Ascending aorta (tissue), 2 donors: ENCODE measurements at regions of chr20 and their contacts with region 1.

Region 1: GRCh38 chr20:1802385-1803060 is 92.7 kb upstream of the SIRPA start:
- DNase-seq: peak in 1 of 2 donors; percentile 83
- H3K4me3 ChIP-seq: peak overlapping the region; percentile 74 to 76
- H3K27ac ChIP-seq: peak overlapping the region; percentile 52 to 69
- H3K4me1 ChIP-seq: peaks cover 4 to 6% of the 10 kb centered on the region in 2 donors
- H3K27me3 ChIP-seq: no peaks in the 10 kb centered on the region
- CTCF ChIP-seq: peak; percentile 65 to 87 (median 67)

Region 2: DNA sequence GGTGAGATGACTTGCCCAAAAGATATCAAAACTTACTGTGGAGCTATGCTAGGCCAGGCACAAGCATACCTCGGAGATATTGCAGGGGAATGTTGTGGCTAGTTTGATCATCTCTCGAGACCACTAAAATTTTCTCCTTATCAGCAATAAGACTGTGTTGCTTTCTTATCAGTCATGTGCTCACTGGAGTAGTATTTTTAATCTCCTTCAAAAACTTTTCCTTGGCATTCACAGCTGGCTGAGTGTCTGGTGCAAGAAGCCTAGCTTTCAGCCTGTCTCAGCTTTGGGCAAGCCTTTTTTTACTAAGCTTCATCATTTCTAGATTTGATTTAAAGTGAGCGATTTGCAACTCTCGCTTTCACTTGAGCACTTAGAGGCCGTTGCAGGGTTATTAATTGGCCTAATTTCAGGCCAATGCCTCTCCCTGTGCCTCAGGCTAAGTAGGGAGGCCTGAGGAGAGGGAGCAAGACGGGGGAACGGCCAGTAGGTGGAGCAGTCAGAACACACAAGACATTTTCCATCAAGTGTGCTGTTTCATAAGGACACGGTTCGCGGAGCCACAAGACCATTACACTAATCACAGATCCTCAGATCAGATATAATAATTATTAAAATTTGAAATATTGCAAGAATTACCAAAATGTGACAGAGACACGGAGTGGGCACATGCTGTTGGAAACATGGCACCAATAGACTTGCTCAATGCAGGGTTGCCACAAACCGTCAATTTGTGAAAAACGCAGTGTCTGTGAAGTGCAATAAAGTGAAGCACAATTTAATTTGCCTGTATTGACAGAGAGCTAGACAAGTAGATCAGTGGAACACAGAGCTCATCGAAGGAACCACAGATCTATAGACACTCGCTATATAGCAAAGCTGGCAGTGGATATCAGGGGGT is 38.1 kb before region 1 on chr20:
- intact Hi-C with region 1: no loop called
- DNase-seq: peak; percentile 23 to 87
- H3K4me3 ChIP-seq: no peak overlapping the region
- H3K27ac ChIP-seq: no peak overlapping the region
- H3K4me1 ChIP-seq: peaks cover 0 to 6% of the 10 kb centered on the region in 2 donors
- H3K27me3 ChIP-seq: no peaks in the 10 kb centered on the region
- CTCF ChIP-seq: peak; percentile 52 to 80 (median 73)

Region 3: DNA sequence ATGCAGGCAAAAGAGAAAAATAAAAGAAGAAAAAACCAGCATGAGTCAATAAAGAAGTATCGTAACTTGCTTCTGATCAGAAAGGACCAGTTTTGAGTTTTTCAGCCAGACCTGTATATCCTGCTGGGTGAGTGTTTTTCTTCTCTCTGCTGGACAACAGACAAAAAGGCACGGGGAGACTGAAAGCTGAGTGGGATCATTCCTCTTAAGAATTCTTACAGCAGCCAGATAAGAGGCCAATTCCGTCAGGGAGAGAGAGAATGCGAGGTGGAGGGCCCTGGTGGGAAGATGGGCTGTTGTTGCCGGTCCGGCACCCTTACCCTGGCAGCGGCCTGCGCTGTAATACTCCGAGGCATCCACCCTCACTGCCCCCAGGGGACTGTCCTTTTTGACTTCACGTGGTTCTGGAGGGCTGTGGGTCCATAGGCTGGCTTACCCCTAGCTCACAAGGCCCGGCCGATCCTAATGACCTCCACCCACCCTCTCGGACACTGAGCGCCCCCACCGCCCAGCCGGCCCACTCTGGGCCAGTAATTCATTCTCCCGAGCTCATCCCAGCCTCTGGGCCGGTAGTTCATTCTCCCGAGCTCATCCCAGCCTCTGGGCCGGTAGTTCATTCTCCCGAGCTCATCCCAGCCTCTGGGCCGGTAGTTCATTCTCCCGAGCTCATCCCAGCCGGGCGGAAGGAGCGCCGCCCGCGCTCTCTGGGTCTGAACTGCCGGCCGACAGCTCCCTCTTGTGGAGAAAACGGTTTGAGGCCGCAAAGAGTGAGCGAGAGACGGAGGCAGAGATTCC is 25.6 kb before region 1 on chr20:
- intact Hi-C with region 1: loop called (anchors 1 kb)
- DNase-seq: peak; percentile 41 to 93
- H3K4me3 ChIP-seq: peak overlapping the region; percentile 60 to 74
- H3K27ac ChIP-seq: no peak overlapping the region
- H3K4me1 ChIP-seq: peaks cover 0 to 8% of the 10 kb centered on the region in 2 donors
- H3K27me3 ChIP-seq: no peaks in the 10 kb centered on the region
- CTCF ChIP-seq: peak; percentile 71 to 83 (median 82)

Region 4: DNA sequence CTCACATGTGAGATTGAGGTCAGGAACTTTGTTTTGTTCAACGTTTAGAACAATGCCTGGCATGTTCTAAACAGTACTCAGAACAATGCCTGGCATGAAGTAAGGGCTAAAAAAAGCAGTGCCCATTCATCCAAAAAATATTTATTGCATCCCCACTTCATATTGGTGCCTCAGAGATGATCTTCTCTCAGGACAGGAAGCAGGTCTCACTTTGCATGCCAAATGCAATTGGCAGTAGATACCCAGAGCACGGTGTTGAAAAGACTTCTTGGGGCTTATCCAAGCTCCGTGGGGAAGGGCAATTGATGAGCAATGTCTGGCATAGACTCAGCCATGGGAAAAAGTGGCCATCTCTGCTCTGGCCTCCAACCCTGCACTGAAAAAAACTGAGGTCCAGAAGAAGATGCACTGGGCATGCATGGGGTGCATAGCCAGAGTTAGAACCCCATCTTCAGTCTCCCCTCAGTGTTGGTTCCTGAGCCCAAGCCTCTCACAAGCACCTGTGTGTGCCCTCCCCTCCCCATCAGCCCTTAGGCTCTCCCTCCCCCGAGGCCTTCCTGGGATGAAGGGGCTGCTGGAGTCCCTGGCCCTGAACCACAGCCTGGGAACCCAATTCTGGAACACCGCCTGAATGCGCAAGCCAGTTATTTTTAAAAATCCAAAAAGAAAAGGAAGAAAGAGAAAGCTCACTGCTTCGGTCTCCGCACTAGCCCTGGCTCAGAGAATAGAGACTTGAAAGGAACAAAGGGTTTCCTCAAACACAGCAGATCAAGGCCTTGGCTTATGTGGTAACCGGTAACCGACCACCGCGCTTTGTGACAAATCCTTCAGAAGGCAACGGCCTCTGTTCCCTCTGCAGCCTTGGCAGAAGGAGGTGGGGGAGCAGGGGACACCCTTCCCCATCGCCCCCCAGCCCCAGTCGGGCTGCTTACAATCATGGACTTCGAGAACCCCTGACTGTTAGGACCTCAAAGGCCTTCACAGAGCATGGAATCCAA is 14.2 kb after region 1 on chr20:
- intact Hi-C with region 1: loop called (anchors 1 kb)
- DNase-seq: no peak
- H3K4me3 ChIP-seq: peak overlapping the region in 1 of 2 donors; percentile 37
- H3K27ac ChIP-seq: peak overlapping the region; percentile 80 to 92
- H3K4me1 ChIP-seq: peaks cover 34 to 65% of the 10 kb centered on the region in 2 donors
- H3K27me3 ChIP-seq: no peaks in the 10 kb centered on the region
- CTCF ChIP-seq: no peak